ENCODE measurements at regions of chr21 and their contacts with region 1.

Region 1: DNA sequence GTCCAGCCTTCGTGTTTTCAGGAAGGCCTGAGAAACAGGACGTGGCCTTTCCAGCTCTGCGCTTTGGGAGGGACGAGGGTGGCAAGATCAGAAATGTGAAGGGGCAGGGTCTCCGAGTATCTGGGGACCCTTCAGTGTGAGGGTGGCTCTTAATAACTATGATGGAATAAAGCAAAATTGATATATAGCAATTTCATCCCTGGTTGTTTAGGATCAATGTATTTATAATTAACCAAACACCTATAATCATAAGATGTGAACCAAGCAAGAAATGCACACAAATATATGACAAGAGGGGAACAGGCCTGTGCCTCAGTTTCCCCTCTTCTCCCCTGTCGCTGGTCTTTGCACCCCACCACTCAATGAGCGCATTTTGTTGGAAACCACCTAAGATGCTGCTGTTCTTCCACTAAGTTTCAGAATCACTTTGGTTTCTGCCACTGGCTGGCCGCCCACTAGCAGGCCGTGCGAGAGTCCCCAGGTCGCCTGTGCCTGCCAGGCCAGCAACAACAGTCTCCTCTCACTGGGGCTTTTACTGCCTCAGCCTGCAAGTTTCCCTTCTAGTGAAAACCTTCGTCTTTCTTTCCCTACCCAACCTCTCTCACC is 36.6 kb downstream of the UBASH3A start:
- DNase-seq: no peak
- H3K4me3 Mint-ChIP-seq: peak overlapping the region; percentile 69
- H3K27ac Mint-ChIP-seq: peak overlapping the region; percentile 92
- H3K4me1 Mint-ChIP-seq: peaks cover 46% of the 10 kb centered on the region
- H3K27me3 Mint-ChIP-seq: no peaks in the 10 kb centered on the region

Region 2: DNA sequence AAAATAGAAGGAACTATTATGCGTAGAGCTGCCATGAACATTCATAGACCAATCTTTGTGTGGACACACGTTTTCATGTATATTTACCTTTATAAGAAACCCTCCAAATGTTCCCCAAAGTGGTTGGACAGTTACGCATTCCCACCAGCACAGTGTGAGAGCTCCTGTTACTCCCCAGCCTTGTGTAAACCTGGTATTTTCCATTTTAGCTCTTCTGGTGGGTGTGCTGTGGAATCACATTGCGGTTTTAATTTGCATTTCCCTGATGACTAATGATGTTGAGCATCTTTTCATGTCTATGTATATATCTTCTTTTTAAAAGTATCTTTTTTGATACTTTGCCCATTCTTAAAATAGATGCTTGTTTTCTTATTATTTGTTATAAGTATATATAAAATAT is 39.8 kb before region 1 on chr21:
- intact Hi-C with region 1: loop called (anchors 1 kb)
- DNase-seq: peak; percentile 76
- H3K4me3 Mint-ChIP-seq: peak overlapping the region; percentile 63
- H3K27ac Mint-ChIP-seq: peak overlapping the region; percentile 74
- H3K4me1 Mint-ChIP-seq: peaks cover 48% of the 10 kb centered on the region
- H3K27me3 Mint-ChIP-seq: no peaks in the 10 kb centered on the region

Region 3: DNA sequence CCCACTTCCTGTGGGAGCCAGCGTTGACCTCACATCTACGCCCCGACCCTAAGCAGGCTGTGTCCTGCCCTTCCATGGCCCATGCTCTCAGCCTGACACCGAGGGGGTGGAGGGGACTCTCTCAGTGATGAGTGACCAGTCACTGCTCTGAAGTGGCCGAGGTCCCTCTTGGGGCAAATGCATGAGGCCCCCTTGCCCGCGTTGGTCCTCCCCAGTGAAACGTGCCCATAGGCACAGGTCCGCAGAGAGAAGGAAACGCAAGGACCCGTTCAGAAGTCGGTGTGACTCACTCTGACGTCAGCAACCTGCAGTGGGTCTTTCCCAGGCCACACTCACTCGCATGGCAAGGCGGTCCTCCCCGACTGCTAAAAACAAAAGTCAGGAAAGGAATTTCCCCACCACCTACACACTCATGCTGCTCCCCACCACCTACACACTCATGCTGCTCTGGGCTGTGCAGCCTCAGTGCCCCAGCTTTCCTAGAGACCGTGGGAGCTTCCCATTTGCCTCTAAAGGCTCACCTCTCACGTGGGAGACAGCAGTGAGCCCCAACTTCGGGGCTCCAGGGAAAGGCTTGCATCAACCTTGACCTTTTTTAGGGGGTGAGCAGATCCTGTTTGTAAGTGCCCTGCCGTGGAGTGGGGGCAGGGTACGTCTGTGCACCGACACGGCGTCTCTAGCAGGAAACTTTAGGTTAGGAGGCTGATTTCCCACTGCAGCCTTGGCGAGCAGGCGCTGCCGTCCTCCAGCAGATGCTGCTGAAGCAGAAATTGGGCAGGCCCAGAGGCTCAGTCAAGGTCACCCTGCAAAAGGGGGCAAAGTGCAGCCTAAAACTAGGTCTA is 25.1 kb before region 1 on chr21:
- intact Hi-C with region 1: loop called (anchors 2 kb)
- DNase-seq: peak; percentile 96
- H3K4me3 Mint-ChIP-seq: peak overlapping the region; percentile 77
- H3K27ac Mint-ChIP-seq: peak overlapping the region; percentile 99
- H3K4me1 Mint-ChIP-seq: peaks cover 58% of the 10 kb centered on the region
- H3K27me3 Mint-ChIP-seq: no peaks in the 10 kb centered on the region

Region 4: GRCh38 chr21:42424914-42425541 is 15.3 kb before region 1 on chr21:
- intact Hi-C with region 1: loop called (anchors 1 kb)
- DNase-seq: peak; percentile 93
- H3K4me3 Mint-ChIP-seq: peak overlapping the region; percentile 79
- H3K27ac Mint-ChIP-seq: peak overlapping the region; percentile 92
- H3K4me1 Mint-ChIP-seq: peaks cover 64% of the 10 kb centered on the region
- H3K27me3 Mint-ChIP-seq: no peaks in the 10 kb centered on the region